ENCODE measurements at regions of chr1 and their contacts with region 1.

Region 1: DNA sequence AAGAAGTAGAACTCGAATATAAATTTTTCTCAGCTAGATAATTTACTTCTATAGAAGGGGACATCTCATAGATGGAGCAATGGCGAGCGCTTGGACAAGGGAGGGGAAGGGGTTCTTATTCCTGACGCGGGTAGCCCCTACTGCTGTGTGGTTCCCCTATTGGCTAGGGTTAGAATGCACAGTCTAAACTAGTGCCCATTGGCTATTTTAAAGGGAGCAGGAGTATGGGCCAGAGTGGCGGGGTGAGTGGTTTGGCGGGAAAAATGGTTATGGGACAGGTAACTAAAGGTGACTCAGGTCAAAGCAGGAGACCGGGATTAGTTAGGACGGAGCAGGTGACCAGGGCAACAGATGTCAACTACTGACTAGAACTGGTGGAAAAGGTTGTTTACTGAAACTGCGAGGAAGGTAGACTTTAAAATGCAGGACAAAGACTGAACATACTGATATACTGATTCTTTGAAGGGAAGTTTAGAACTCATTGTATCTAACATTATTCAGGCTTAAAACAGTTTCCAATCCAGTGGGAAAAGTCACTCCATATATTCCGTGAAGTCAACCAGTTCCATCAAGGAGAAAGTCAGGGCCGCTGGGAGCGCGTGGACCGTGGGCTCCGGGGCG is 940 bp upstream of the ATAD3A start:
- DNase-seq: peak; percentile 20 to 46 (median 35)
- H3K4me3 ChIP-seq: peak overlapping the region; percentile 66 to 91 (median 87)
- H3K27ac ChIP-seq: peak overlapping the region; percentile 90 to 93
- H3K4me1 ChIP-seq: peaks cover 2 to 21% (median 11%) of the 10 kb centered on the region in 4 experiments
- H3K27me3 ChIP-seq: no peaks in the 10 kb centered on the region

Region 2: DNA sequence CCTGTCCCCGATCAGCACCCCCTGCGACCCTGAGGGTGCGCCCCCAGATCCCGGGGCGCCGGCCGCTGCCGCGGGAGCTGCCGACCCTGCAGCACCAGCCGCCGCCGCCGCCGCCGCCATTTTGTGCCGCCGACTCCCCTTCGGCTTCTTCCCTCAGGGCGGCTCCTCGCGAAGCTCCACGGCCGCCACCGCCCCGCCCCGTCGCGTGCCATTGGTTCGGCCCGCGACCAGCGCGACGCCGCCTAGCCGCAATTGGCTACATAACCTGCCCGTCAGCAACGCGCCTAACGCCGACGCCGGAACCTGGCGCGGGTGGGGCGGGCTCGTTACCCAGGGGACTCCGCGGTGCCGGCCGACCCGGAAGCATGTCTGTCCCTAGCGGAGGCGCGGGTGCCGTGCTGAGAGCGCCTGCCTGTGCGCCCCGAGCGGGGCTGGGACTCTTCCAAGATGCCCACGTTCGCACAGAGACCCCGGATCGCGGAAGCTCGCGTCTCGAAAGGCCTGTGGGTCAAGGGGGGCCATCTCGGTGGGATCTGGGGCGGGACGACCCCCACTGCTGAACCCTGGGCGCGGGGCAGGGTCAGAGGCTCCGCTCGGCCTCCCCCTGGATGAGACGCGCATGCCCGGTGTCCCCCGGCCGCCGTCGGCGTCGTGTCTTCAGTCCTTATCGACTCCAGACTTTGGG is 111.7 kb before region 1 on chr1 and contains the start of gene CCNL2:
- CTCF ChIA-PET with region 1: interaction called, 10 read pairs
- POLR2A ChIA-PET with region 1: no interaction called
- DNase-seq: peak; percentile 99
- H3K4me3 ChIP-seq: peak within 1 kb of the TSS; percentile 86 to 97 (median 92)
- H3K27ac ChIP-seq: peak within 1 kb of the TSS; percentile 79 to 91
- H3K4me1 ChIP-seq: peaks cover 0 to 33% (median 30%) of the 10 kb centered on the region in 4 experiments
- H3K27me3 ChIP-seq: no peaks in the 10 kb centered on the region

Region 3: DNA sequence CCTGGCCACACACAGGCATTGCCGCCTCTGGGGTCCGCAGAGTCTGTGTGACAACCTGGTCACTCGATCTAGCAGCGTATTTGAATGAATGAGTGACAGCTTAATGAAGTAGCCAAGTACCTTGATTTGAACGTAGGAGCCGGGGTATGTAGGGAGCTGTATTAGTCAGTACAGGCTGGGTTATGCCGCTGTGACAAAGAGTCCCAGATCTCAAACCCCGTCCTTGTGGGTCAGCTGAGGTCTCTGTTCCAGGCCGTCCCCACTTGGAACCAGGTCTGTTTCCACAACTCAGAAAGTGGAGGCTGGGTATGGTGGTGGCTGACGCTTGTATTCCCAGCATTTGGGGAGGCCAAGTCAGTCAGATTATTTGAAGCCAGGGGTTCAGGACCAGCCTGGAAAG is 19.4 kb before region 1 on chr1:
- CTCF ChIA-PET with region 1: no interaction called
- POLR2A ChIA-PET with region 1: no interaction called
- DNase-seq: no peak
- H3K4me3 ChIP-seq: no peak overlapping the region
- H3K27ac ChIP-seq: no peak overlapping the region
- H3K4me1 ChIP-seq: no peaks in the 10 kb centered on the region
- H3K27me3 ChIP-seq: no peaks in the 10 kb centered on the region

Region 4: GRCh38 chr1:1664941-1665799 is 154.1 kb after region 1 on chr1:
- CTCF ChIA-PET with region 1: no interaction called
- POLR2A ChIA-PET with region 1: no interaction called
- DNase-seq: no peak
- H3K4me3 ChIP-seq: no peak overlapping the region
- H3K27ac ChIP-seq: no peak overlapping the region
- H3K4me1 ChIP-seq: no peaks in the 10 kb centered on the region
- H3K27me3 ChIP-seq: no peaks in the 10 kb centered on the region